GM12878 (cell line): ENCODE measurements at regions of chr12 and their contacts with region 1.

Region 1: DNA sequence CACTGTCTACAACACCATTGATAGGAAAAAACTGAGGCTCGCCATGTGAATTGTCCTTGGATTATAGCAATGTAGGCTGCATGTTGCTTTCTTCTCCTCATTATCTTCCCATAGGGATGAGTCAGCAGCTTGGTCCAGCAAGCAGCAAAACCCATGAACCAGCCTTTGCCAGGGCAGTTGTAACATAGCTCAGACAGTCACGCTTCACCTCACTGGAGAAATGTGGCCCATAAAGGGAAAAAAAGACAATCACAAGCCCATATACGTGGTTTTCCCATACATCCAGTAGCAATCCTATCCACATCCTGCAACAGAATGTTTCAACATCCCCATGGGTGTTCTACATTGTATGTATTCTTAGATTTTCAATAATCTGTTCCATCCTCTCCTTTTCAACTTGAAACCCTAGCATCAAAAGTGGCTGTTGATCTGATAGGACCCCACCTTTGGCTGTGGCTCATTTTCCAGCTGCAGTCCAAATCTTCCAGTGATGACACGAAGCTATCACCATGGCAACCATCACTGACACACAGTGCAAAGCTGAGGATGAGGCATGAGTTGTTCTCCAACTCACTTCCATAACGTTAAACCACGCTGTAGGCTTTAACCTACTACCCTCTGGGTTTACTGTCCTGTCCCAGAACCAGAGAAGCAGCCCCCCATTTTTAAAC is 34.0 kb downstream of the GRIN2B start:
- DNase-seq: no peak
- ATAC-seq: no peak
- H3K4me3 ChIP-seq: no peak overlapping the region
- H3K27ac ChIP-seq: no peak overlapping the region
- H3K4me1 ChIP-seq: no peaks in the 10 kb centered on the region
- H3K27me3 ChIP-seq: no peaks in the 10 kb centered on the region; a peak in 2 of 4 replicates
- CTCF ChIP-seq: no peak
- EP300 ChIP-seq: no peak
- POLR2A ChIP-seq: no peak
- RAD21 ChIP-seq: no peak

Region 2: DNA sequence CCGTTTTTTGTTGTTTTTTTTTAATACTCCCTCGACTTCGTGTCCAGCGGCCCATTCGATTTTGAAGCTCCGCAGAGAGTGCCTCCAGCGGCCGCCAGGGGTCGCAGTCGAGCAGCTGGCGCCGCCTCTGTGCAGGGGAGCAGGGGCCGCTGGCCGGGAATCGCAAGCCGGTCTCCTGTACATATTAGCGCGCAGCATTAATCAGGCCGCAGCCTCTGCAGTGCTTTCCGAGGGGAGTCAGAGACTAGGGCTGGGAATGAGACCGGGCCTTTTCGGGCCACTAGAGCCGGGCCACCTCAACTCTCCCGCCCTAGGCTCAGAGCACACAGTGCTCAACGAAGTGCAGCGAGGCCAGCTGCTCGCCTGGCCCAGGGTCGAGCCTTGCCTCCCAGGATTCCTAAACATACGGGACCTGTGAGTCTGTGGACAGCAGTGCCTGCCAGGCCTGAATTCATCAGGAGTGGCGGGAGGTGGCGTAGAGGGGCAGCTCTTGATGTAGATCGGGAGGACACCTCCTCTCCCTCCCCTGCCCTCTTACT is 669.1 kb before region 1 on chr12:
- CTCF ChIA-PET with region 1: no interaction called
- POLR2A ChIA-PET with region 1: no interaction called
- RAD21 ChIA-PET with region 1: no interaction called
- SMC1A ChIA-PET with region 1: no interaction called
- in situ Hi-C with region 1: no loop called
- intact Hi-C with region 1: loop called (anchors 2 kb)
- DNase-seq: no peak
- ATAC-seq: peak; percentile 93
- H3K4me3 ChIP-seq: no peak overlapping the region
- H3K27ac ChIP-seq: no peak overlapping the region
- H3K4me1 ChIP-seq: no peaks in the 10 kb centered on the region
- H3K27me3 ChIP-seq: peaks cover 0 to 7% of the 10 kb centered on the region in 2 experiments; a peak in 2 of 4 replicates
- CTCF ChIP-seq: peak; percentile 68 to 85 (median 75)
- EP300 ChIP-seq: no peak
- POLR2A ChIP-seq: no peak
- RAD21 ChIP-seq: peak; percentile 41

Region 3: GRCh38 chr12:13799574-13799973 is 147.8 kb before region 1 on chr12:
- CTCF ChIA-PET with region 1: no interaction called
- POLR2A ChIA-PET with region 1: no interaction called
- RAD21 ChIA-PET with region 1: no interaction called
- SMC1A ChIA-PET with region 1: no interaction called
- in situ Hi-C with region 1: no loop called
- intact Hi-C with region 1: no loop called
- DNase-seq: no peak
- ATAC-seq: no peak
- H3K4me3 ChIP-seq: no peak overlapping the region
- H3K27ac ChIP-seq: no peak overlapping the region
- H3K4me1 ChIP-seq: no peaks in the 10 kb centered on the region
- H3K27me3 ChIP-seq: no peaks in the 10 kb centered on the region; a peak in 1 of 4 replicates
- CTCF ChIP-seq: no peak
- EP300 ChIP-seq: no peak
- POLR2A ChIP-seq: no peak
- RAD21 ChIP-seq: no peak

Region 4: GRCh38 chr12:13935169-13935568 is 12.2 kb before region 1 on chr12:
- CTCF ChIA-PET with region 1: no interaction called
- POLR2A ChIA-PET with region 1: no interaction called
- RAD21 ChIA-PET with region 1: no interaction called
- SMC1A ChIA-PET with region 1: no interaction called
- in situ Hi-C with region 1: no loop called
- intact Hi-C with region 1: no loop called
- DNase-seq: no peak
- ATAC-seq: no peak
- H3K4me3 ChIP-seq: no peak overlapping the region
- H3K27ac ChIP-seq: no peak overlapping the region
- H3K4me1 ChIP-seq: no peaks in the 10 kb centered on the region
- H3K27me3 ChIP-seq: 0 out of 4 replicates have a peak, but pooled peaks cover 0 to 3% of the 10 kb centered on the region in 2 experiments
- CTCF ChIP-seq: no peak
- EP300 ChIP-seq: no peak
- POLR2A ChIP-seq: no peak
- RAD21 ChIP-seq: no peak